HAP-1 (cell line): ENCODE measurements at regions of chr13 and their contacts with region 1.

Region 1: DNA sequence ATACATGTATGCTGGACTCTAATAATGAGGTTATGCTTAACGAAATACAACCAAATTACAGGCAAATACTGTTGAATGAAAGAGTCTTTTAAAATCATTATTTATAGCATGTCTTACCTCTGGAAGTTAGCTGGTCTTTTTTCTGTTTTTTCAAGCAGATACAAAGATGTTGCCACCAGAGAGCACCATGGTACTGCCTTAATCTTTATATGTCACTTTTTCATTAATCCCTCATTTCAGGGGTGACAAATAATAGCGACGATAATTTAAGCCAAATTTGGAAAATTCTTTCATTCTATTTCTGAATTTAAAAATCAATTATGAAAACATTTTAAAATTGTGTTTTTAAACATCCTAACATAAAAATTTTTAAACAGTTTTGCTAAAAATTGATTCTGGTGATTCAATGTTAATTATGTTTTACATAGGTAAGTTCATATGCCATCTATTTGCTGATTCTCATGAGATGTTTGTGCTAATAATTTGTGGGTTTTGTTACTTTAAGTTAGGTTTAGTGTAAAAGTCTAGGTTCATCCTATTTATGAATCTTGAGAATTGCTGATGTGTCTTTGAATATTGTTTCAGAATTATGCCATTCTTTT is 379.3 kb upstream of the SGCG start:
- DNase-seq: peak in 1 of 2 experiments; percentile 49
- H3K4me3 ChIP-seq: no peak overlapping the region
- H3K4me1 ChIP-seq: peaks cover 10% of the 10 kb centered on the region
- H3K27me3 ChIP-seq: no peaks in the 10 kb centered on the region

Region 2: GRCh38 chr13:23018143-23018542 is 216.6 kb after region 1 on chr13:
- in situ Hi-C with region 1: loop called (anchors 10 kb)
- DNase-seq: no peak
- H3K4me3 ChIP-seq: no peak overlapping the region
- H3K4me1 ChIP-seq: no peaks in the 10 kb centered on the region
- H3K27me3 ChIP-seq: no peaks in the 10 kb centered on the region

Region 3: GRCh38 chr13:23159230-23159759 is 357.8 kb after region 1 on chr13:
- in situ Hi-C with region 1: loop called (anchors 25 kb)
- DNase-seq: peak; percentile 32 to 76
- H3K4me3 ChIP-seq: peak overlapping the region; percentile 31
- H3K4me1 ChIP-seq: no peaks in the 10 kb centered on the region
- H3K27me3 ChIP-seq: peaks cover 10% of the 10 kb centered on the region; the same call in 1 of the 2 replicates

Region 4: GRCh38 chr13:23319883-23320224 is 518.4 kb after region 1 on chr13:
- in situ Hi-C with region 1: loop called (anchors 10 kb)
- DNase-seq: no peak
- H3K4me3 ChIP-seq: no peak overlapping the region
- H3K4me1 ChIP-seq: peaks cover 6% of the 10 kb centered on the region; the same call in 1 of the 2 replicates
- H3K27me3 ChIP-seq: no peaks in the 10 kb centered on the region

Region 5: GRCh38 chr13:23433171-23434153 is 632.0 kb after region 1 on chr13 and contains the start of gene SACS:
- in situ Hi-C with region 1: loop called (anchors 25 kb)
- DNase-seq: peak; percentile 89 to 90
- H3K4me3 ChIP-seq: peak within 1 kb of the TSS; percentile 56
- H3K4me1 ChIP-seq: peaks cover 13% of the 10 kb centered on the region
- H3K27me3 ChIP-seq: no peaks in the 10 kb centered on the region